ENCODE measurements at regions of chr2 and their contacts with region 1.

Region 1: GRCh38 chr2:72887754-72888437 is 688 bp downstream of the SPR start:
- H3K4me3 ChIP-seq: peak overlapping the region; percentile 55
- H3K27ac ChIP-seq: peak overlapping the region; percentile 78
- H3K4me1 ChIP-seq: no peaks in the 10 kb centered on the region
- CTCF ChIP-seq: peak; percentile 85

Region 2: DNA sequence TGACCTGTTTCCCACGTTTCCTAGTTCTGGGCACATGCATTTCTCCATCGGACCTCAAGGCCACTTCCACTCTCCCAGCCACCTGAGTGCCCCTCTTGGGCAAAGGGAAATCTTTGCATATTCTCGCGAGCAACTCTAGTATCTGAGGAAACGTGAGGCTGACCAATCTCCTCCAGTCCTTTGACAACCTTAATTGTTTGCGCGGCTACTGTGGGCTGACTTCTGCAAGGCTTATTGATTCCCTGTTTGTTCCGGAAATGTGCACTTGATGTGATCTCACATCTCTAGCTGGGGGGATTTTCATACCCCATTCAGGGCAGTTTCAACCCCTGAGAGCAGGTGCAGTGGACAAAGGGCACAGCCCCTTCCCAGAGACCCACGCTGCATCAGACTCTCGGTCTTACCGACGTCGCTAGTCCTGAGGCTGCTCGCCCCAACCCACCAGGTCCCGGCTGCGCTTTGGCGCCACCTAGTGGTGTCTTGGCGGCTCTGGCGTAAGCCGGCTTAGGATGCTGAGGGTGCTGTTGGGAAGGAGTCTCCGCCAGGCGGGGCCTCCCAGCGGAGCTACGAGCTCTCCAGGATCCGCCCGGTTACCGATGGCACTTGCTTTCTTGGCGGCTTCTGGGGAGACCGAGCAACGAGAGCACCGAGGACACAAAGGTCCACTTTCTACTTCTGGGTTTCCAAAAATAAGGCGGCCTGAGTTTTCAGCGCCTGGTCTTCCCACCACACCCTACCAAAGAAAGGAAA is 25.5 kb before region 1 on chr2:
- CTCF ChIA-PET with region 1: interaction called, 44 read pairs
- POLR2A ChIA-PET with region 1: no interaction called
- H3K4me3 ChIP-seq: peak overlapping the region; percentile 36
- H3K27ac ChIP-seq: no peak overlapping the region
- H3K4me1 ChIP-seq: no peaks in the 10 kb centered on the region
- CTCF ChIP-seq: peak; percentile 98

Region 3: DNA sequence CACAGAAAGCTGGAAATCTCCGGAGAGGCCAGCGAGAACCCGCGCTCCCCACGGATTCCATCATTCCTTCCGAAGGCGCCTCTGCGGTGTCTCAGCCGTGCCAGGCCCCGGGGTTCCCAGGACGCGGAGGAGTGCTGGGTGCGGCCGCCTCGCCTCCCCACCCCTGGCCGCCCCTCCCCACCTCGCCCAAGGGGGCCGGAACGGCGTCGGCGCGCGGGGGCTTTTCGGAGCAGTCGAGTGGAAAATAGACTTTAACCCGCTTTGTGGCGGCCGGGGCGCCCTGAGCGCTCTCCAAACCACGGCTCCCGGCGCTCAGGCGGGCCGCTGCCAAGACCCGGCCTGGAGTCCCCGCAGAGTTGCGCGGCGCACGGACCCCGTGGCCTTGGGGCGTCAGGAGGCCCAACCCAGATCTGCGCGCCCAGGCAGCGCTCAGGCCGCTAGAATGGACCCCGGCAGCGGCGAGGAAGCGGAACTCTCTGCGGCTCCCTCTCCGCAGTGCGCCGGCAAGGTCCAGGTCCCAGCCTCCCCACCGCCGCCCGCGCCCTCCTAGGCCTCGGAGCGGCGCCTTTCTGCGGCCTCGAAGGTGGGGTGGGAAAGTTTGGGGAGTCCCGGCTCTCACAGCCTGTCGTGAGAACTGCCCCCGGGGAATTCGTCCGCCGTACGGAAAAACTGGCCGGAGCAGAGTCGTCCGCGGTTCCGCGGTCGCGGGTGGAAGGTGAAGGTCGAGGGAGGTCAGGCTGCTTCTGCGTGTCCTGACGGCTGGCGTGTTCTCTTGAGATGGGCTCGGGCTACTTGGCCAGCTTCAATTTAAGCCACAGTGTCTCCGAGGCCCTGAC is 28.2 kb after region 1 on chr2:
- CTCF ChIA-PET with region 1: interaction called, 20 read pairs
- POLR2A ChIA-PET with region 1: interaction called, 9 read pairs
- H3K4me3 ChIP-seq: peak overlapping the region; percentile 25
- H3K27ac ChIP-seq: no peak overlapping the region
- H3K4me1 ChIP-seq: no peaks in the 10 kb centered on the region
- CTCF ChIP-seq: no peak

Region 4: GRCh38 chr2:72940786-72941185 is 52.9 kb after region 1 on chr2:
- CTCF ChIA-PET with region 1: interaction called, 85 read pairs
- POLR2A ChIA-PET with region 1: no interaction called
- H3K4me3 ChIP-seq: no peak overlapping the region
- H3K27ac ChIP-seq: no peak overlapping the region
- H3K4me1 ChIP-seq: peaks cover 5% of the 10 kb centered on the region; the same call in 1 of the 2 replicates
- CTCF ChIP-seq: no peak

Region 5: GRCh38 chr2:72980535-72981217 is 92.8 kb after region 1 on chr2:
- CTCF ChIA-PET with region 1: interaction called, 168 read pairs
- POLR2A ChIA-PET with region 1: no interaction called
- H3K4me3 ChIP-seq: no peak overlapping the region
- H3K27ac ChIP-seq: no peak overlapping the region
- H3K4me1 ChIP-seq: peaks cover 3% of the 10 kb centered on the region; the same call in 1 of the 2 replicates
- CTCF ChIP-seq: no peak

Region 6: GRCh38 chr2:73176881-73177644 is 289.2 kb after region 1 on chr2:
- CTCF ChIA-PET with region 1: interaction called, 75 read pairs
- POLR2A ChIA-PET with region 1: interaction called, 6 read pairs
- H3K4me3 ChIP-seq: peak overlapping the region; percentile 26
- H3K27ac ChIP-seq: no peak overlapping the region
- H3K4me1 ChIP-seq: peaks cover 3% of the 10 kb centered on the region; the same call in 1 of the 2 replicates
- CTCF ChIP-seq: peak; percentile 100

Measured in HEK293 (cell line).